ENCODE measurements at regions of chr4 and their contacts with region 1.

Region 1: GRCh38 chr4:163587867-163588266 is 93.4 kb downstream of the TMA16 start:
- DNase-seq: peak; percentile 85
- ATAC-seq: peak; percentile 81
- H3K4me3 ChIP-seq: peak overlapping the region in 1 of 5 experiments; percentile 37
- H3K4me3 Mint-ChIP-seq: peak overlapping the region; percentile 55
- H3K27ac ChIP-seq: peak overlapping the region; percentile 35 to 56
- H3K27ac Mint-ChIP-seq: peak overlapping the region; percentile 83
- H3K4me1 ChIP-seq: peaks cover 63 to 66% of the 10 kb centered on the region in 2 donors
- H3K4me1 Mint-ChIP-seq: peaks cover 69% of the 10 kb centered on the region
- H3K27me3 ChIP-seq: no peaks in the 10 kb centered on the region
- H3K27me3 Mint-ChIP-seq: no peaks in the 10 kb centered on the region
- CTCF ChIP-seq: peak; percentile 85

Region 2: GRCh38 chr4:163540977-163541376 is 46.9 kb before region 1 on chr4:
- CTCF ChIA-PET with region 1: no interaction called
- POLR2A ChIA-PET with region 1: no interaction called
- intact Hi-C with region 1: no loop called
- DNase-seq: no peak
- ATAC-seq: no peak
- H3K4me3 ChIP-seq: no peak overlapping the region
- H3K4me3 Mint-ChIP-seq: no peak overlapping the region
- H3K27ac ChIP-seq: peak overlapping the region in 1 of 2 donors; percentile 58
- H3K27ac Mint-ChIP-seq: no peak overlapping the region
- H3K4me1 ChIP-seq: peaks cover 17 to 19% of the 10 kb centered on the region in 2 donors
- H3K4me1 Mint-ChIP-seq: peaks cover 19% of the 10 kb centered on the region
- H3K27me3 ChIP-seq: no peaks in the 10 kb centered on the region
- H3K27me3 Mint-ChIP-seq: no peaks in the 10 kb centered on the region
- CTCF ChIP-seq: no peak

Region 3: DNA sequence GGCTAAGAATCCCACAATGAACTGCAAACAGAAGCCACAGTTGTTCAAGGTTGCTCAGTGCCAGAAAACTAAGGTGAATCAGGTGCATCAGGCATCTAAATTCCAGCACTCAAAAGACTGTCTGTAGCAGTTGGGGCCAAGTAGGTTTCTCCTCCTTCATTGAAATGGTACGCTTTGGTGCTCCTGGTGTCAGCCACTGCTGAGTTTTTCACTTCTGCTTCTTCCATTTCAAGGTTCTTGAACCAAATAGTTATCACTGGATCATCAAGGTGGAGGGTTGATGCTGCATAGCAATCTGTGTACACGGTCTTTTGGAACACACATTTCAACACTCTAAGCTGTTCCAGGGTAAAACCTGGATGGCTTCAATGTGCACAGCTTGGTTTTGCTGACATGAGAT is 19.0 kb before region 1 on chr4:
- CTCF ChIA-PET with region 1: interaction called, 4 read pairs
- POLR2A ChIA-PET with region 1: interaction called, 3 read pairs
- intact Hi-C with region 1: loop called (anchors 2 kb)
- DNase-seq: peak; percentile 59
- ATAC-seq: peak; percentile 90
- H3K4me3 ChIP-seq: peak overlapping the region in 1 of 5 experiments; percentile 21
- H3K4me3 Mint-ChIP-seq: peak overlapping the region; percentile 54
- H3K27ac ChIP-seq: peak overlapping the region; percentile 50 to 76
- H3K27ac Mint-ChIP-seq: peak overlapping the region; percentile 88
- H3K4me1 ChIP-seq: peaks cover 49 to 63% of the 10 kb centered on the region in 2 donors
- H3K4me1 Mint-ChIP-seq: peaks cover 81% of the 10 kb centered on the region
- H3K27me3 ChIP-seq: no peaks in the 10 kb centered on the region
- H3K27me3 Mint-ChIP-seq: no peaks in the 10 kb centered on the region
- CTCF ChIP-seq: no peak

Region 4: DNA sequence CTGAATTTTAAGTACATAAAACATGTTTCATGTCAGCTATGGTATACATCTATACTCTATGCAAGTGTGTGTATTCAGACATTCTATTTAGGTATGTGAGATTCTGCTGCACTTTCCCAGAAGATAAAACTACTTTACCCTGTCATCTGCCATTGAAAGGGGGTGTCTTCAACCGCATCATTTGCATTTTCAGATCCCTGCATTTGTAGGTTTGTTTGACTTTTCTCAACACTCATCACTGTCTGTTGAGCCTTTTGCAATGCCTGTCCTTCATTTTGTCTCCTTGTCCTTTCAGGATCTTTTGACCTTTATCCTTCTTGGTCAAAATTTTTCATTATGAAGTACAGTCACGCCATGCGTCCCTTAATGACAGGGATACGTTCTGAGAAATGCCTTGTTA is 10.2 kb after region 1 on chr4:
- CTCF ChIA-PET with region 1: interaction called, 15 read pairs
- POLR2A ChIA-PET with region 1: no interaction called
- intact Hi-C with region 1: loop called (anchors 1 kb)
- DNase-seq: peak; percentile 32
- ATAC-seq: peak; percentile 62
- H3K4me3 ChIP-seq: peak overlapping the region in 2 of 5 experiments; percentile 4 to 41
- H3K4me3 Mint-ChIP-seq: peak overlapping the region; percentile 62
- H3K27ac ChIP-seq: peak overlapping the region in 1 of 2 donors; percentile 77
- H3K27ac Mint-ChIP-seq: peak overlapping the region; percentile 85
- H3K4me1 ChIP-seq: peaks cover 55 to 78% of the 10 kb centered on the region in 2 donors
- H3K4me1 Mint-ChIP-seq: peaks cover 66% of the 10 kb centered on the region
- H3K27me3 ChIP-seq: no peaks in the 10 kb centered on the region
- H3K27me3 Mint-ChIP-seq: no peaks in the 10 kb centered on the region
- CTCF ChIP-seq: no peak

Region 5: DNA sequence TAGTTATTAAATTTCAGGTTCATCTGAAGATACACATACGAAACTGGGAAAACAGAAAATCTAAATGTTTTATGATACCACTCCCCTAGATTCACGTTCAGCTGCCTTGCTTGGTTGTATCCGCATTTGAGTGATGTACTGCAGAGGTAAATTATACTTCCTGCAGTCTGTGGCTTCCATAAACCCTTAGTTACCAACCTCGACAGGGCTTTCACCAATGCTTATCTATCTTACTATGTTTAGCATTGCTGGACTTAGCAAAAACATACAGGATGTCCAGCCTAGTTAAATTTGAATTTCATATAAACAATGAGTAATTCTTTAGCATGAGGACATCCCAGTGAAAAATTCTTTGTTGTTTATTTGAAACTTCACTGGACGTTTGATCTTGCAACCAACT is 15.4 kb after region 1 on chr4:
- CTCF ChIA-PET with region 1: interaction called, 15 read pairs
- POLR2A ChIA-PET with region 1: interaction called, 3 read pairs
- intact Hi-C with region 1: loop called (anchors 1 kb)
- DNase-seq: peak; percentile 27
- ATAC-seq: no peak
- H3K4me3 ChIP-seq: peak overlapping the region in 4 of 5 experiments; percentile 7 to 60 (median 36)
- H3K4me3 Mint-ChIP-seq: peak overlapping the region; percentile 89
- H3K27ac ChIP-seq: peak overlapping the region; percentile 16 to 89
- H3K27ac Mint-ChIP-seq: peak overlapping the region; percentile 96
- H3K4me1 ChIP-seq: peaks cover 72 to 84% of the 10 kb centered on the region in 2 donors
- H3K4me1 Mint-ChIP-seq: peaks cover 82% of the 10 kb centered on the region
- H3K27me3 ChIP-seq: no peaks in the 10 kb centered on the region
- H3K27me3 Mint-ChIP-seq: no peaks in the 10 kb centered on the region
- CTCF ChIP-seq: no peak

Region 6: DNA sequence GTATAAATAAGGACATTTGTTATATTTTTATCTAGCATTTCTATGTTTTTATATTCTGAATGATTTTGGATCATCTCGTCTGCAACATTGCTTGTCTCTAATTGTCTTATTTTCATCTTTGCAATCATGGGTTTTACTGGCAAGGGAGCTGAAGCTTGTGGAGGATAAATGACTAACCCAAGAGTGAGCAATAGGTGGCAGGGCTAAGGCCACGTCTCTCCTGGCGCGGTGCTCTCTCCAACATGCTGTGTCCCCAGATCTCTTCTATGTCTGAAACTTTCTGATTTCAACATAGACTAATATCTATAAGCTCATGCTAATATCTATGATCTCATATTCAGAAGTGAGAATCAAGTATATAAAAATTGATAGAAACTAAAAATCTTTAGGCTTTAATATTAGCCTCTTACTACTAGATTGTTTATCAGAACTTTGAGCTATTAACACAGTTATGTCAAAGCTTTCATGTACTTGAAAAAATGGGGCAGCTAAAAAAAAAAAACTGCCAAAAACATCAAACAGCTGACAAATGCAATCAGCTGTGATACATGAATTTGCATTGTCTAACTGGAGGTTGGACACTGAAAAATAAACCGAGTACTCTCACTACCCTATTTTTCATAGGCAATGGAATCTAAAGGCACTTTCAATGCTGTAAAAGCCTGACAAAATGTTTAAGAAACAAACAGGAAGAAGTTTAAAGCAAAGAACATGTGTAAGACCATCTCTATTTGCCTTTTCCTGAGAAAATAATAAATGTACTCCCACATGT is 75.8 kb after region 1 on chr4:
- CTCF ChIA-PET with region 1: interaction called, 52 read pairs
- POLR2A ChIA-PET with region 1: interaction called, 16 read pairs
- intact Hi-C with region 1: loop called (anchors 1 kb)
- DNase-seq: peak; percentile 84
- ATAC-seq: peak; percentile 71
- H3K4me3 ChIP-seq: peak overlapping the region in 3 of 5 experiments; percentile 6 to 48 (median 32)
- H3K4me3 Mint-ChIP-seq: peak overlapping the region; percentile 84
- H3K27ac ChIP-seq: peak overlapping the region; percentile 93 to 94
- H3K27ac Mint-ChIP-seq: peak overlapping the region; percentile 98
- H3K4me1 ChIP-seq: peaks cover 69 to 72% of the 10 kb centered on the region in 2 donors
- H3K4me1 Mint-ChIP-seq: peaks cover 75% of the 10 kb centered on the region
- H3K27me3 ChIP-seq: no peaks in the 10 kb centered on the region
- H3K27me3 Mint-ChIP-seq: no peaks in the 10 kb centered on the region
- CTCF ChIP-seq: no peak

Region 7: DNA sequence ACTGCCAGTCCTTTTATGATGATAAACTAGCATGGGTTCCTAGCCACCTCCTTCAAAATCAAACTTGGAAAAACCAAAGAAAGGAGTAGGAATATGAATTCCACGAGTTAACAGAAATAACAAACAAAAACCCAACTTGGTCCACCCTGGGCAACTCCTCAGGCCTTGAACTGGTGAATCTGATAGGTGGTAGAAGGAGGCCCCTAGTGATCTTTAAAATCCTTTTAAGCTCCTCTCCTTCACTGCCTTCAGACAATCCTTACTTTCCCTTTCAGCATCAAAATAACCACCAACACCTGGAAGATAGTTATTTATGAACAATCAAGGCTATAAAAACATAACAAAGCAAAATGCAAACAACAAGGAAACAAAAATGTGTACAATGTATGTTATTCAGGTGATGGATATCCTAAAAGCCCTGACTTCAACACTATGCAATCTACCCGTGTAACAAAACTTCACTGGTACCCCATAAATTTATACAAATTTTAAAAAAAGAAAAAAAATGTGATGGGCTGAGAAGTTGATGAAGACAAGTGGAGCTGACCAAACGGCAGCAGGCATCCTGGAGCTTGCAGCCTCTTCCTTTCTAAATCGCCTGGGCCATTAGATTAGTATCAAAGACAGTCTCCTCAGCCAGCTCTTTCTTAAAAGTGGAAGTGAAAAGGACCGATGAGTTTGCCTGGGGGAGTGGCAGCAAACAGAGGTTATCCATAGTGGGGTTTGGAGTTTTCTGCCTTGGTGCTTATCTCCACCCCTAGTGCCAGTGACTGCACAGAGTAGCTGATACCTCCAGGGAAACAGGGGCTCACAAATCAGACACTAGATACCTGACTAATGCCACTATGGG is 86.2 kb after region 1 on chr4:
- CTCF ChIA-PET with region 1: interaction called, 21 read pairs
- POLR2A ChIA-PET with region 1: interaction called, 3 read pairs
- intact Hi-C with region 1: no loop called
- DNase-seq: peak; percentile 64
- ATAC-seq: peak; percentile 83
- H3K4me3 ChIP-seq: peak overlapping the region in 3 of 5 experiments; percentile 0 to 34 (median 12)
- H3K4me3 Mint-ChIP-seq: peak overlapping the region; percentile 78
- H3K27ac ChIP-seq: peak overlapping the region; percentile 34 to 83
- H3K27ac Mint-ChIP-seq: peak overlapping the region; percentile 92
- H3K4me1 ChIP-seq: peaks cover 26 to 50% of the 10 kb centered on the region in 2 donors
- H3K4me1 Mint-ChIP-seq: peaks cover 48% of the 10 kb centered on the region
- H3K27me3 ChIP-seq: no peaks in the 10 kb centered on the region
- H3K27me3 Mint-ChIP-seq: no peaks in the 10 kb centered on the region
- CTCF ChIP-seq: no peak

Region 8: GRCh38 chr4:163681208-163681821 is 93.4 kb after region 1 on chr4:
- CTCF ChIA-PET with region 1: interaction called, 40 read pairs
- POLR2A ChIA-PET with region 1: no interaction called
- intact Hi-C with region 1: no loop called
- DNase-seq: peak; percentile 80
- ATAC-seq: peak; percentile 85
- H3K4me3 ChIP-seq: no peak overlapping the region
- H3K4me3 Mint-ChIP-seq: no peak overlapping the region
- H3K27ac ChIP-seq: no peak overlapping the region
- H3K27ac Mint-ChIP-seq: peak overlapping the region; percentile 74
- H3K4me1 ChIP-seq: peaks cover 6 to 11% of the 10 kb centered on the region in 2 donors
- H3K4me1 Mint-ChIP-seq: peaks cover 24% of the 10 kb centered on the region
- H3K27me3 ChIP-seq: no peaks in the 10 kb centered on the region
- H3K27me3 Mint-ChIP-seq: no peaks in the 10 kb centered on the region
- CTCF ChIP-seq: peak; percentile 87

Region 9: DNA sequence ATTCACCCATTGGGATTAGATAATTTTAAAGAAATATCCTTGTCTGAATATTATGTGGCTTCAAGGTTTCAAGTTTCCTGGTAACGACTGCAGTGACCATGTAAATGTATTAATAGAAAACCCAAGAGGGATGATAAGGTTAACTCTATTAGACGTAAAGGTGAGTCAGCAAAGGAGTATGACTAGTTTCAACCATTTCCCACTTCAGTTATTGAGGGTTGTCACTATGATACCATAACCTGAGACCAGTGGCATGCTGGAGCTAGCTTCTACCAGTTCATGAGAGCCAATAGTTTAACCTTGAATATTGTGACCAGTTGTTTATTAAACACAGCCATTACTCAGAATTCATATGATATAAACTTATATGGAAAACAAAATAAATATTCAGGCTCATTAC is 176.7 kb after region 1 on chr4:
- CTCF ChIA-PET with region 1: no interaction called
- POLR2A ChIA-PET with region 1: no interaction called
- intact Hi-C with region 1: no loop called
- DNase-seq: no peak
- ATAC-seq: no peak
- H3K4me3 ChIP-seq: no peak overlapping the region
- H3K4me3 Mint-ChIP-seq: no peak overlapping the region
- H3K27ac ChIP-seq: no peak overlapping the region
- H3K27ac Mint-ChIP-seq: no peak overlapping the region
- H3K4me1 ChIP-seq: no peaks in the 10 kb centered on the region
- H3K4me1 Mint-ChIP-seq: no peaks in the 10 kb centered on the region
- H3K27me3 ChIP-seq: peaks cover 0 to 18% (median 3%) of the 10 kb centered on the region in 4 experiments
- H3K27me3 Mint-ChIP-seq: peaks cover 9% of the 10 kb centered on the region
- CTCF ChIP-seq: no peak